HEK293 (cell line): ENCODE measurements at regions of chr11 and their contacts with region 1.

Region 1: DNA sequence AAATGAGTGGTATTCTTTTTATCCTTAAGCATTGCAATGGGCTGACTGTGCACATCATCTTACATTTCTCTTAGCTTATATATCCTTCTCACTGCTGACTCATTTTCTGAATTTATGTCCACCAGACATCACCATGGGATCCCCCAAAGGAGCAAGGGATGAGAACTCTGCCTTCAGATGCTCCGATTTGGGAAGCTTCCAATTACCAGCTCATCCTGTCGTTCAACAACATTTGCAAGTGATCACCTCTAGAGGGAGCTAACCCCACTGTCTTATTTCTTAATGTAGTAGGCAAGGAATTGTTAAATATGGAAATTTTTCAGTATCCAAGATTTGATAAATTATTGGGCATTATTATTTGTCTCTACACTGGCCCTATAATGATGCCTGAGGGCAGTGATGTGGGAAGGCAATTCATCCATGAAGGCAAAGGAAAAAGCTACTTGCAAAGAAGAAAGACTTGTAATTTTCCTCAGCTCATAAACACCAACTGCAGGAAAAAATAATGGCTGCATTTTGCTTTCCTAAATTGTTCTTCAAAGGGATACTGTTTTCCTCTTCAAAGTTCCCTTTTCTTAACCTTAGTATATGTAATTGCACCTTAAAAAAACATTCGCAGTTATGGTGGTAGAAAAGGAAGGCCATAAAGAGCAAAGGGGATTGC is 102.4 kb upstream of the FSHB start:
- H3K4me3 ChIP-seq: no peak overlapping the region
- H3K27ac ChIP-seq: no peak overlapping the region
- H3K4me1 ChIP-seq: no peaks in the 10 kb centered on the region
- CTCF ChIP-seq: no peak

Region 2: DNA sequence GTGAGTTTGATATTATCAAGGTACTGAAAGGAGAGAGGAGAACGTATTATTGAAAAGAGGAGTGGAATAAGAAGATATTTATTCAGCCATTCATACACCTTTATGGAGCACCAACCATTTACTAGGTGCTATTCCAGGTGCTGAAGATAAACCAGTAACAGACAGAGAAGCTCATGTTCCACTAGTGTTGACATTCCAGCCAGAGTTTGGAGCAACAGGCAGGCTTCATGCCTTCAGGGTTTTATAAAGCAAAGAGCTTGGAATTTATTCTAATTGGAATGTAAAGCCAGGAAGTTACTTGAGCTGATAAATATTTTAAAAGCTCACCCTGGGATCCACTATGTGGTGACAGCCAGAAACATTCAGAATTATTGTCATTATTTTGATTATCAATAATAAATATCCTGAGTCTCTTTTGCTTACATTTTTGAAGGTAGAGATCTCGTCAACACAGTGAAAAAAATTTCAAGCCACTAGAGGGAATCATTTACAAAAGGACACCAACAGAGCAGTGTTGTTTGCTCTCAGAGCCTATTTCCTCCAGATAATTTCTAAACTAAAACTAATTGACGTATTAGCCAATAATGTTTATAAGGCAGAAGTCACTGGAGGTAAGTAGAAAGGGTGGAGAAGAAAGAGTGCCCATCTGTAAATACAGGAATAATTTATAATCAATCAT is 283.6 kb before region 1 on chr11:
- CTCF ChIA-PET with region 1: no interaction called
- POLR2A ChIA-PET with region 1: no interaction called
- H3K4me3 ChIP-seq: no peak overlapping the region
- H3K27ac ChIP-seq: no peak overlapping the region
- H3K4me1 ChIP-seq: no peaks in the 10 kb centered on the region
- CTCF ChIP-seq: no peak

Region 3: DNA sequence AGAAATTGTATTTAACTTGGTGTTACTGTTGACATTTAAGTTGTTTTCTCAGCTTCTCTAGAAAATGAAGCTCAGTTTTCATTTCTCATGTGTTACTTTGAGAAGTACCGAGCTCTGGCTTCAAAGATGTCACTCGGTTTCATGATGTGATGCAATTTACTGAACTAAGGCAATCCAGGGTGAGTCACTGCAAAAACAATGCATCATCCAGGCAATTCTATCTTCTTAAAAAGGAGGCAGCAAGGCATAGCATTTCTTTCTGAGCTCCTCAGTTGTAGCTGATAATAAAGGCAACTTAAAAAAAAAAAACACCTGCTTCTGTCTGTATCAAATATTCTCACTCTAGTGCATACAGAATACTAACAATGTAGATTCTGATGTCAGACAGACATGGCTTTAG is 20.5 kb before region 1 on chr11:
- CTCF ChIA-PET with region 1: interaction called, 53 read pairs
- POLR2A ChIA-PET with region 1: no interaction called
- H3K4me3 ChIP-seq: no peak overlapping the region
- H3K27ac ChIP-seq: no peak overlapping the region
- H3K4me1 ChIP-seq: no peaks in the 10 kb centered on the region
- CTCF ChIP-seq: no peak

Region 4: GRCh38 chr11:30113326-30113873 is 15.0 kb before region 1 on chr11:
- CTCF ChIA-PET with region 1: interaction called, 53 read pairs
- POLR2A ChIA-PET with region 1: no interaction called
- H3K4me3 ChIP-seq: no peak overlapping the region
- H3K27ac ChIP-seq: no peak overlapping the region
- H3K4me1 ChIP-seq: no peaks in the 10 kb centered on the region
- CTCF ChIP-seq: no peak

Region 5: GRCh38 chr11:30143098-30143705 is 14.8 kb after region 1 on chr11:
- CTCF ChIA-PET with region 1: interaction called, 130 read pairs
- POLR2A ChIA-PET with region 1: no interaction called
- H3K4me3 ChIP-seq: no peak overlapping the region
- H3K27ac ChIP-seq: no peak overlapping the region
- H3K4me1 ChIP-seq: no peaks in the 10 kb centered on the region
- CTCF ChIP-seq: no peak

Region 6: GRCh38 chr11:30150425-30150824 is 22.0 kb after region 1 on chr11:
- CTCF ChIA-PET with region 1: interaction called, 130 read pairs
- POLR2A ChIA-PET with region 1: no interaction called
- H3K4me3 ChIP-seq: no peak overlapping the region
- H3K27ac ChIP-seq: no peak overlapping the region
- H3K4me1 ChIP-seq: no peaks in the 10 kb centered on the region
- CTCF ChIP-seq: no peak

Region 7: GRCh38 chr11:30196400-30197206 is 68.2 kb after region 1 on chr11:
- CTCF ChIA-PET with region 1: interaction called, 26 read pairs
- POLR2A ChIA-PET with region 1: no interaction called
- H3K4me3 ChIP-seq: no peak overlapping the region
- H3K27ac ChIP-seq: no peak overlapping the region
- H3K4me1 ChIP-seq: no peaks in the 10 kb centered on the region
- CTCF ChIP-seq: peak; percentile 47; the same call in 1 of the 2 replicates

Region 8: GRCh38 chr11:30218278-30218677 is 89.9 kb after region 1 on chr11:
- CTCF ChIA-PET with region 1: no interaction called
- POLR2A ChIA-PET with region 1: no interaction called
- H3K4me3 ChIP-seq: no peak overlapping the region
- H3K27ac ChIP-seq: no peak overlapping the region
- H3K4me1 ChIP-seq: no peaks in the 10 kb centered on the region
- CTCF ChIP-seq: no peak

Region 9: GRCh38 chr11:30260813-30261212 is 132.4 kb after region 1 on chr11:
- CTCF ChIA-PET with region 1: no interaction called
- POLR2A ChIA-PET with region 1: no interaction called
- H3K4me3 ChIP-seq: no peak overlapping the region
- H3K27ac ChIP-seq: no peak overlapping the region
- H3K4me1 ChIP-seq: no peaks in the 10 kb centered on the region
- CTCF ChIP-seq: no peak

Region 10: DNA sequence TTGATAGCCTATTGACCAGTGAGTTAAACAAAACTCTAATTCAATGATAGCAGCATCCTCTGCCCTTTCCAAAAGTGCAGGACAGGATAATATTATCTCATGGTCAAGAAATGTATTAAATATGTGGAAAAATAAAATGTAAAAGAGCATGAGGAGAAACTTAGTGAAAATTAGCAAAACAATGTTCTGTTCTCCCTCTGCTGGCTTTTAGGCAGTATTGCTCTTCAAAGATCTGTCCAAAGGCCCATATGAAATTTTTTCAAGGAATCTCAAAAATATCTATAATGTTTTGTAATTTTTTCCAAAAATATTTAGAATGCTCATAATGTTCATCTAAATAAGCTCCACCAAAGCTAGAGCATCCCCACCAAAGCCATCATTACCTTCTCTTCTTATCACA is 186.2 kb after region 1 on chr11:
- CTCF ChIA-PET with region 1: interaction called, 10 read pairs
- POLR2A ChIA-PET with region 1: no interaction called
- H3K4me3 ChIP-seq: no peak overlapping the region
- H3K27ac ChIP-seq: no peak overlapping the region
- H3K4me1 ChIP-seq: no peaks in the 10 kb centered on the region
- CTCF ChIP-seq: no peak